Caco-2 (cell line): ENCODE measurements at regions of chr16 and their contacts with region 1.

Region 1: DNA sequence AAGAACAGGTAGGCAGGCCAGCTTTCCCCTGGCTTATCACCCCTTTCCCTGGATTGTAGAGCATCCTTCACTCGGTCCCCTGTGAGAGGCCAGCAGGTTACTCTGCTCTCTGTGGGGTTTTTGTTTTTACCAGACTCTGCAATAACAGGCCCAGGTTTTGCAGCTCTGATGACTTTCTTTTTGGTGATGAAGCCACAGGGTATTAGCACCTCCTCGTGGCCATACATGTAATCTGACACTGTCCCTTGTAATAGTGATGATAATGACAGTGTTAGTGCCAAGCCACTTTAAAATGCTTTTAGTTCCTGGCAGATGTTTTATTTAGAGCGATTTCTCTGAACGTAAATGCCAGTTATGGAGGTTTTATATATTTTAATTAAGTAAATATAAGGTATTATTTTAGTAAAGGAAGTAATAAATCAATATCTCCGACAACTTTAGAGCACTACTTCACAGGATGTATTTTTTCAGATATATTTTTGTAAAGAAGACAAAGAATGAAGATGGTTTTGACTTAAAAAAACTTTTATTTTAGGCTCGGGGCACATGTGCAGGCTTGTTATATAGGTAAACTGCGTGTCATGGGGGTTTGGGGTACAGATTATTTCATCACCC is 38.0 kb upstream of the CPHXL start:
- DNase-seq: peak; percentile 67 to 73
- H3K4me3 ChIP-seq: no peak overlapping the region
- H3K4me3 Mint-ChIP-seq: no peak overlapping the region
- H3K27ac Mint-ChIP-seq: no peak overlapping the region
- H3K4me1 ChIP-seq: no peaks in the 10 kb centered on the region
- H3K4me1 Mint-ChIP-seq: no peaks in the 10 kb centered on the region
- H3K27me3 ChIP-seq: no peaks in the 10 kb centered on the region
- H3K27me3 Mint-ChIP-seq: peaks cover 10% of the 10 kb centered on the region
- CTCF ChIP-seq: peak; percentile 85 to 90

Region 2: GRCh38 chr16:75471723-75472633 is 292.3 kb before region 1 on chr16:
- CTCF ChIA-PET with region 1: no interaction called
- POLR2A ChIA-PET with region 1: no interaction called
- intact Hi-C with region 1: loop called (anchors 1 kb)
- DNase-seq: peak in 1 of 2 experiments; percentile 68
- H3K4me3 ChIP-seq: no peak overlapping the region
- H3K4me3 Mint-ChIP-seq: no peak overlapping the region
- H3K27ac Mint-ChIP-seq: no peak overlapping the region
- H3K4me1 ChIP-seq: no peaks in the 10 kb centered on the region
- H3K4me1 Mint-ChIP-seq: no peaks in the 10 kb centered on the region
- H3K27me3 ChIP-seq: no peaks in the 10 kb centered on the region
- H3K27me3 Mint-ChIP-seq: peaks cover 3% of the 10 kb centered on the region
- CTCF ChIP-seq: peak; percentile 77 to 83

Region 3: DNA sequence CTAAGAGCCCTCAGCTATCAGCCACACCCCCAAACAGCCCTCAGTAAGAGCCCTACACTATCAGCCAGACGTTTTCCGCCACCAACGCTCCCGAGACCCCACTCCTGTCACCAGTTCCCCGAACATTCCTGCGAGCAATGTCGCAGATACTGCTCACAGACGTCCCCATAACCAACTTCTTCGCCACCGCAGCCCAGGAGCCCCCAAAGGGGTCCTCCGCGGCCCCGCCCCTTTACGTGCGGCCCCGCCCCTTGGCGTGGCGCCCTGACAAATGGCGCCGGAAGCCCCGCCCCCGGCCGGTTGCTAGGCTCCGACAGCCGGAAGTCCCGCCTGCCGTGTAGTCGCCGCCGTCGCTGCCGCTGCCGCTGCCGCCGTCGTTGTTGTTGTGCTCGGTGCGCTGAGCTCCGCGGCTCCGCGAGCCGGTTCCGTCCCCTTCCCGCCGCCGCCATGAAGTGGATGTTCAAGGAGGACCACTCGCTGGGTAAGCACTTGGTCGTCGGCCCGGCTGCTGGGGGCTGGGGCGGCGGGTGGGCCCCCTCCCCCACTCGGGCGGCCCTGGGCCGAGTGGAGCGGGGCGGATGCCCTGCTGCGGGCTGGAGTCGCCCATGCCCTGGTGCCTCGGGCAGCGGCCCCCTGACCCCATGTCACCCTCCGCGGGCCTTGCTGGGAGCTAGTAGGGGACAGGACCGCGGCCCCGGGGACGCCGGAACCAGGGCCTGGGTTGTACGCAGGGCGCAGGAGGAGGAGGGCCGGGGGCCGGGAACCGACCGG is 198.0 kb before region 1 on chr16 and contains the start of gene GABARAPL2:
- CTCF ChIA-PET with region 1: no interaction called
- POLR2A ChIA-PET with region 1: no interaction called
- intact Hi-C with region 1: loop called (anchors 5 kb)
- DNase-seq: peak; percentile 88 to 95
- H3K4me3 ChIP-seq: peak within 1 kb of the TSS; percentile 44
- H3K4me3 Mint-ChIP-seq: peak within 1 kb of the TSS; percentile 85
- H3K27ac Mint-ChIP-seq: peak within 1 kb of the TSS; percentile 58
- H3K4me1 ChIP-seq: 0 out of 2 replicates have a peak, but pooled peaks cover 10% of the 10 kb centered on the region
- H3K4me1 Mint-ChIP-seq: no peaks in the 10 kb centered on the region
- H3K27me3 ChIP-seq: no peaks in the 10 kb centered on the region
- H3K27me3 Mint-ChIP-seq: peaks cover 10% of the 10 kb centered on the region
- CTCF ChIP-seq: no peak
- total RNA-seq, gene GABARAPL2: 82.6 and 88.2 TPM in 2 replicates

Region 4: GRCh38 chr16:75647492-75648264 is 116.6 kb before region 1 on chr16 and contains the starts of genes KARS1 and TERF2IP:
- CTCF ChIA-PET with region 1: interaction called, 6 read pairs
- POLR2A ChIA-PET with region 1: no interaction called
- intact Hi-C with region 1: loop called (anchors 1 kb)
- DNase-seq: peak; percentile 93 to 95
- H3K4me3 ChIP-seq: peak within 1 kb of the TSS; percentile 97
- H3K4me3 Mint-ChIP-seq: peak within 1 kb of the TSS; percentile 91
- H3K27ac Mint-ChIP-seq: peak within 1 kb of the TSS; percentile 98
- H3K4me1 ChIP-seq: peaks cover 12% of the 10 kb centered on the region
- H3K4me1 Mint-ChIP-seq: peaks cover 18% of the 10 kb centered on the region
- H3K27me3 ChIP-seq: no peaks in the 10 kb centered on the region
- H3K27me3 Mint-ChIP-seq: no peaks in the 10 kb centered on the region
- CTCF ChIP-seq: no peak
- total RNA-seq, gene KARS1: 244 and 245 TPM in 2 replicates
- total RNA-seq, gene TERF2IP: 25.1 and 27.1 TPM in 2 replicates

Region 5: GRCh38 chr16:75695704-75696103 is 68.6 kb before region 1 on chr16:
- CTCF ChIA-PET with region 1: no interaction called
- POLR2A ChIA-PET with region 1: no interaction called
- intact Hi-C with region 1: loop called (anchors 2 kb)
- DNase-seq: peak in 1 of 2 experiments; percentile 19
- H3K4me3 ChIP-seq: no peak overlapping the region
- H3K4me3 Mint-ChIP-seq: no peak overlapping the region
- H3K27ac Mint-ChIP-seq: no peak overlapping the region
- H3K4me1 ChIP-seq: no peaks in the 10 kb centered on the region
- H3K4me1 Mint-ChIP-seq: no peaks in the 10 kb centered on the region
- H3K27me3 ChIP-seq: no peaks in the 10 kb centered on the region
- H3K27me3 Mint-ChIP-seq: no peaks in the 10 kb centered on the region
- CTCF ChIP-seq: peak; percentile 15 to 35

Region 6: DNA sequence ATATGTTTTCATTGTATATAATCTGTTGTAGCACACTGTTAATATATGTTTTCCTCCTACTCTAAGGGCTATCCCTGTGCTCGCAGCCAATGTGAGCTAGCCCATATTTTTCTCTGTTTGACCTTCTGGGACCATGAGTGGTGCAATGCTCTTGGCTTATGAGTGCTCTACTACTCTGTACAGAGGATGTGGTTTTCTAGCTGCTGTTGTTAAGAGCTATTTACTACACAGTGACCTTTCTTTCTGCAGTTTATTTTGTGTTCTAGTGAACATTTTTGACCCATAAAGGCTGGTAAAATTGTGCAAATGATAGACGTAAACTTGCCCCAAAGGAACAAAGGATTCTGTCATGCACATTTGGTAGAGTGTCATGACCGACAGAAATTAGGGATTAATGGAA is 46.1 kb after region 1 on chr16:
- CTCF ChIA-PET with region 1: no interaction called
- POLR2A ChIA-PET with region 1: no interaction called
- intact Hi-C with region 1: no loop called
- DNase-seq: no peak
- H3K4me3 ChIP-seq: no peak overlapping the region
- H3K4me3 Mint-ChIP-seq: no peak overlapping the region
- H3K27ac Mint-ChIP-seq: no peak overlapping the region
- H3K4me1 ChIP-seq: no peaks in the 10 kb centered on the region
- H3K4me1 Mint-ChIP-seq: no peaks in the 10 kb centered on the region
- H3K27me3 ChIP-seq: no peaks in the 10 kb centered on the region
- H3K27me3 Mint-ChIP-seq: no peaks in the 10 kb centered on the region
- CTCF ChIP-seq: no peak